ENCODE measurements at regions of chr10 and their contacts with region 1.

Region 1: DNA sequence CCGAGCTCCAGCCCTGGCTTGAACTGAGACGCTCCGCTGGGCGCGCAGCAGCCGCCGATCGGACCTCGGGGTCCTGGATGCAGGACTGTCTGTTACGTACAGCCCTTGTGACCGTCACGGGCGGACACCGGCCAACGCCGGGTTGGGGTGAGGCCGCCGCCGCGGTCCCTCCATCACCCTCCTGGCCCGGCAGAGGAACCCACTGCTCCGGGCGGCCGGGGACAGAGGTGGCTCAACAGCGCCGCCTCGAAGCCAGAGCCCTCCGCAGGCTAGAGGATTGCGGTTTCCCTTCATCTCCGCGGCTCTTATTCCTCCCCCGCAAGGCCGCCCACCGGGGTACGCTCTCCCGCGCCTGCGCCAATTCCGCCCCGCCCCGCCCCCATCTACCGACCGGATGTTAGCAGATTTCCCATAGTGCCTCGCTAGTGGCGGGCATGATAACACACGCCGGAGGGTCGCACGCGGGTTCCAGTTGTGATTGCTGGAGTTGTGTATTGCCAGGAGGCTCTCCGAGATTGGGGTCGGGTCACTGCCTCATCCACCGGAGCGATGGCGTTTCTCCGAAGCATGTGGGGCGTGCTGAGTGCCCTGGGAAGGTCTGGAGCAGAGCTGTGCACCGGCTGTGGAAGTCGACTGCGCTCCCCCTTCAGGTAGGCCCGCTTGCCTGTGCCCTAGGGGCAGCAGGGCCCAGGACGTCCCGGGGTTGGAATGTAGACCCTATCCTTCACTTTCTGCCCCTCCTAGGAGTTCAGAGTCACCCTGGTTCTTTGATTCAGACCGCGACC is at the start of gene TFAM:
- DNase-seq: peak; percentile 92 to 96 (median 94)
- H3K4me3 ChIP-seq: peak within 1 kb of the TSS; percentile 75
- H3K4me3 Mint-ChIP-seq: peak within 1 kb of the TSS; percentile 93 to 98 (median 97)
- H3K27ac ChIP-seq: peak within 1 kb of the TSS; percentile 68
- H3K27ac Mint-ChIP-seq: peak within 1 kb of the TSS; percentile 88 to 99 (median 97)
- H3K4me1 ChIP-seq: peaks cover 34% of the 10 kb centered on the region
- H3K4me1 Mint-ChIP-seq: peaks cover 43 to 66% (median 59%) of the 10 kb centered on the region in 3 donors
- H3K27me3 ChIP-seq: no peaks in the 10 kb centered on the region
- H3K27me3 Mint-ChIP-seq: peaks cover 0 to 6% of the 10 kb centered on the region in 2 donors
- total RNA-seq, gene TFAM: 124 to 136 TPM

Region 2: DNA sequence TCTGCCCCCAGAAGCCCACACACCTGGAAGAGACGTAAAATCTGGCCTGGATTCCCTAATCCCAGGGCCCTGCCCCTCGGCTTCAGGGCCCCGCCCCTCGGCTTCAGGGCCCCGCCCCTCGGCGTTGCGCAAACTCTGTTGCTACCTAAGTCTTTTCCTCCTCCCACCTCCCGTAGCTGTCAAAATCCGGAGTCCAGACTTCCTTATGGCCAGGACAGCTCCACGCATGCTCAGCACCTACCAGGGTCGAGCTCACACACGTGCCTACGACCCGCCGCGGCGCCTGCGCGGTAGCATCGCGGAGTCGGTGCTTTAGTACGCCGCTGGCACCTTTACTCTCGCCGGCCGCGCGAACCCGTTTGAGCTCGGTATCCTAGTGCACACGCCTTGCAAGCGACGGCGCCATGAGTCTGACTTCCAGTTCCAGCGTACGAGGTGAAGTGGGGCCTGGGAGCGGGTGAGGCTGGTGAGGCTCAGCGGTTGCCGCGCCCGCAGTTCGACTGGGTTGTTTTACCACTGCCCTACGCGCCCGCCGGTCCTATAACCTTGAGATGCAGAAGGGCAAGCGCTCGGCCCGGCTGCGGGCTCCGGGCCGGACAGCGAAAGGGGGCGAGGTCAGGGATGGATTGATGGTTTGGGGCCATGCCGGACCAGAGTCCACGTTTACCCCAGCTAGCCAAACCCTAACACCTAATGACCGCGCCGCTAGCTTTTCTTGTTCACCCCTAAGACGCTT is 116.2 kb before region 1 on chr10 and contains the start of gene CISD1:
- CTCF ChIA-PET with region 1: interaction called, 14 read pairs
- POLR2A ChIA-PET with region 1: interaction called, 25 read pairs
- DNase-seq: peak; percentile 89 to 96 (median 95)
- H3K4me3 ChIP-seq: peak within 1 kb of the TSS; percentile 78
- H3K4me3 Mint-ChIP-seq: peak within 1 kb of the TSS; percentile 94 to 99 (median 98)
- H3K27ac ChIP-seq: peak within 1 kb of the TSS; percentile 85
- H3K27ac Mint-ChIP-seq: peak within 1 kb of the TSS; percentile 93 to 99 (median 97)
- H3K4me1 ChIP-seq: peaks cover 32% of the 10 kb centered on the region
- H3K4me1 Mint-ChIP-seq: peaks cover 41 to 56% (median 56%) of the 10 kb centered on the region in 3 donors
- H3K27me3 ChIP-seq: no peaks in the 10 kb centered on the region
- H3K27me3 Mint-ChIP-seq: no peaks in the 10 kb centered on the region
- total RNA-seq, gene CISD1: 51.4 to 55.6 TPM

Region 3: GRCh38 chr10:58282615-58283014 is 102.6 kb before region 1 on chr10:
- CTCF ChIA-PET with region 1: no interaction called
- POLR2A ChIA-PET with region 1: no interaction called
- DNase-seq: peak in 2 of 5 donors; percentile 17 to 22
- H3K4me3 ChIP-seq: no peak overlapping the region
- H3K4me3 Mint-ChIP-seq: peak overlapping the region in 5 of 7 donors; percentile 5 to 49 (median 24)
- H3K27ac ChIP-seq: no peak overlapping the region
- H3K27ac Mint-ChIP-seq: peak overlapping the region in 7 of 8 donors; percentile 27 to 89 (median 71)
- H3K4me1 ChIP-seq: no peaks in the 10 kb centered on the region
- H3K4me1 Mint-ChIP-seq: peaks cover 12 to 14% (median 13%) of the 10 kb centered on the region in 3 donors
- H3K27me3 ChIP-seq: no peaks in the 10 kb centered on the region
- H3K27me3 Mint-ChIP-seq: no peaks in the 10 kb centered on the region

Region 4: DNA sequence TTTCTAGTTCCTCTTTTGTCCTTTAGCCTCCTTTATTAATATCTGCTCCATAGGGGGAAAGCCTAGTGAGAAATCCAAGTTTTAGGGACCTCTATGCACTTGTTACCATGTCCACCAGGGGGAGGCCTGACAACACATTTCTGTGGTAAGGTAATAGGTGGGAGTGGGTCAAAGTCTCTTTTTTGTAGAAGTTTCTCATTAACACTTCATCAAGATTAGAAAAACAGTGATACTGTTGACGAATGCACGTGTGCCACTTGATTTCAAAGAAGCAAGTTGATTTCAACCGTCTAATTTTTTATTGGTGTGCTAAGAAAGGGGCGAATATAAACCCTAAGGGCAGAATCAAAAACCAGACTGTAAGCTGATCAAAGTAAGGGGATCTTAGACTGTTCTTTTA is 85.6 kb before region 1 on chr10:
- CTCF ChIA-PET with region 1: interaction called, 19 read pairs
- POLR2A ChIA-PET with region 1: no interaction called
- DNase-seq: peak; percentile 21 to 65 (median 40)
- H3K4me3 ChIP-seq: no peak overlapping the region
- H3K4me3 Mint-ChIP-seq: no peak overlapping the region
- H3K27ac ChIP-seq: no peak overlapping the region
- H3K27ac Mint-ChIP-seq: peak overlapping the region in 1 of 8 donors; percentile 5
- H3K4me1 ChIP-seq: no peaks in the 10 kb centered on the region
- H3K4me1 Mint-ChIP-seq: peaks cover 3 to 5% (median 3%) of the 10 kb centered on the region in 3 donors
- H3K27me3 ChIP-seq: no peaks in the 10 kb centered on the region
- H3K27me3 Mint-ChIP-seq: peaks cover 3 to 14% of the 10 kb centered on the region in 2 donors

Region 5: DNA sequence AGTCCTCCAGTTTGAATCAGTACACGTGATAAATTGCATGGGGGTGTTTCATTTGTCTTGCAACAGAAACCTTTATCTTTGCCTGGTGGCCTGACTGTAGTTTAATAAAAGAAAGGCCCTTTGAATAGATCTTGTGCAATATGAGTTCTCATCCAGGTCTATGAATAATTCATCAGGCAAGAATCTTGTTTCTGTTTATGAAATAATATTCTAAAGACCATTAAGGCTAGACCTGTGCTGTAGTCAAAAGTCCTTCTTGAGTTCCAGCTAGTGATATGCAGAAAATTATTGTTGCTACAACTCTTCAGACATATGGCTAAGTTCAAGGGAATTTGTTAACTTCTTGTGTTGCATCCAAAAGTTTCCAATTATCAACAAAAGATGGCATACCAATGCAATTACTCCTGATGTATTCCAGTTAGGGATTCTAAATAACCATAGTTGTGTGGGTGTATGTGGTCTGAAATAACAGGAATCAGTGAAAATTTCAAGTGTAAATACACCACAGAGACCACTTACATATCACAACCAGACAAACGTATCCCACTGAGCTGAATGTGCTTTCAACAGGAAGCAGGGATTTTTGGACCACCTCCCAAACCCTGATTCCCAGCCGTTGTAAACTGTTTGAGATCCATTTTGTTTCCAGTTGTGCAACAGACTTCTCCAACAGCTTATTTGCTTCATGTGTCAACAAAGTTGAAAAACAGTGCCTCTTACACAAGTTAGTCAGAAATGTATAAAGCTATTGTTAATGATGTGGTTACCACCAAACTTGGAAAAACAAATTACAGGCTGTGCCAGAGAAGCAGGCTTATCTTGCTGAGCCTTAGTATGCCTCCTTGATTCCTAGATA is 72.8 kb after region 1 on chr10:
- CTCF ChIA-PET with region 1: no interaction called
- POLR2A ChIA-PET with region 1: no interaction called
- DNase-seq: no peak
- H3K4me3 ChIP-seq: no peak overlapping the region
- H3K4me3 Mint-ChIP-seq: no peak overlapping the region
- H3K27ac ChIP-seq: no peak overlapping the region
- H3K27ac Mint-ChIP-seq: no peak overlapping the region
- H3K4me1 ChIP-seq: no peaks in the 10 kb centered on the region
- H3K4me1 Mint-ChIP-seq: no peaks in the 10 kb centered on the region
- H3K27me3 ChIP-seq: no peaks in the 10 kb centered on the region
- H3K27me3 Mint-ChIP-seq: peaks cover 0 to under 1% of the 10 kb centered on the region in 2 donors

Measured in CD8-positive, alpha-beta memory T cell (primary cell).